Colonic mucosa (tissue), 4 donors: ENCODE measurements at regions of chr4 and their contacts with region 1.

Region 1: GRCh38 chr4:85370430-85371032 is 104.4 kb upstream of the ARHGAP24 start:
- DNase-seq: peak; percentile 36
- H3K4me3 ChIP-seq: no peak overlapping the region
- H3K27ac ChIP-seq: no peak overlapping the region
- H3K4me1 ChIP-seq: no peaks in the 10 kb centered on the region
- H3K27me3 ChIP-seq: no peaks in the 10 kb centered on the region
- CTCF ChIP-seq: peak; percentile 68

Region 2: GRCh38 chr4:85019411-85019810 is 351.1 kb before region 1 on chr4:
- intact Hi-C with region 1: no loop called
- DNase-seq: no peak
- H3K4me3 ChIP-seq: no peak overlapping the region
- H3K27ac ChIP-seq: no peak overlapping the region
- H3K4me1 ChIP-seq: no peaks in the 10 kb centered on the region
- H3K27me3 ChIP-seq: no peaks in the 10 kb centered on the region
- CTCF ChIP-seq: no peak

Region 3: GRCh38 chr4:85147439-85148076 is 223.0 kb before region 1 on chr4:
- intact Hi-C with region 1: loop called (anchors 5 kb)
- DNase-seq: peak; percentile 29
- H3K4me3 ChIP-seq: no peak overlapping the region
- H3K27ac ChIP-seq: no peak overlapping the region
- H3K4me1 ChIP-seq: no peaks in the 10 kb centered on the region
- H3K27me3 ChIP-seq: no peaks in the 10 kb centered on the region
- CTCF ChIP-seq: peak; percentile 59

Region 4: GRCh38 chr4:85929961-85930665 is 559.6 kb after region 1 on chr4:
- intact Hi-C with region 1: no loop called
- DNase-seq: peak; percentile 65
- H3K4me3 ChIP-seq: peak overlapping the region; percentile 12
- H3K27ac ChIP-seq: peak overlapping the region; percentile 5
- H3K4me1 ChIP-seq: no peaks in the 10 kb centered on the region
- H3K27me3 ChIP-seq: no peaks in the 10 kb centered on the region
- CTCF ChIP-seq: no peak